ENCODE measurements at regions of chr16 and their contacts with region 1.

Region 1: DNA sequence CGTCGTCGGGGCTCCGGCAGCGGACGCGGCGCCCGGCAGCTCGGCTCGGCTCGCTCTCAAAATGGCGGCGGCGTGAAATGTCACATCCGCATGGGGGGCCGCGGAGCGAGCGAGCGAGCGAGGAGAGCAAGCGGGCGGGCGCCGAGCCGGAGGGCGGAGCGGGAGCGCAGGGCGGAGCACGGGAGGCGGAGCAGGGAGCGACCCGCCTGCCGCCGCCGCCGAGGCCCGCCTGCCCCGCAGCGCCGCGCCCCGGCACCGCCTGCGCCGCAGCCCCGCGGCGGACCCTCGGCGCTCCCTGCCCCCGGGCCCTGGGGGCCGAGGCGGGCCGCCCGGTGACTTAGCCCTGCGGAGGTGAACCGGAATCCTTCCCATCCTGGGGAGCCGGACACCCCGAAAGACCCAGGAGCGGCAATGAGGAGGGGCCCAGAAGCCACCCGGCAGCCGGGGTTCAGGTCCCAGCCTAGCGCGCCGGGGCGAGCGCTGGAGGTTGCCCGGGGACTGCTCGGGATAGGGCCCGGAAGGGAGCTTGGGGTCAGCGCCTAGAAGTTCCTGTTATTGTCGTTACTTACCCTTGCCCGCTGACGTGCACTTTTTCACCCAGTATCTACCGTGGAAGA is at the start of gene USP7:
- DNase-seq: peak; percentile 98
- H3K4me3 Mint-ChIP-seq: peak within 1 kb of the TSS; percentile 94
- H3K27ac Mint-ChIP-seq: peak within 1 kb of the TSS; percentile 93
- H3K4me1 Mint-ChIP-seq: peaks cover 37% of the 10 kb centered on the region
- H3K27me3 Mint-ChIP-seq: peaks cover 5% of the 10 kb centered on the region
- total RNA-seq, gene USP7: 180 and 186 TPM in 2 replicates

Region 2: GRCh38 chr16:8611886-8612600 is 351.9 kb before region 1 on chr16:
- intact Hi-C with region 1: no loop called
- DNase-seq: no peak
- H3K4me3 Mint-ChIP-seq: no peak overlapping the region
- H3K27ac Mint-ChIP-seq: no peak overlapping the region
- H3K4me1 Mint-ChIP-seq: no peaks in the 10 kb centered on the region
- H3K27me3 Mint-ChIP-seq: peaks cover 15% of the 10 kb centered on the region

Region 3: DNA sequence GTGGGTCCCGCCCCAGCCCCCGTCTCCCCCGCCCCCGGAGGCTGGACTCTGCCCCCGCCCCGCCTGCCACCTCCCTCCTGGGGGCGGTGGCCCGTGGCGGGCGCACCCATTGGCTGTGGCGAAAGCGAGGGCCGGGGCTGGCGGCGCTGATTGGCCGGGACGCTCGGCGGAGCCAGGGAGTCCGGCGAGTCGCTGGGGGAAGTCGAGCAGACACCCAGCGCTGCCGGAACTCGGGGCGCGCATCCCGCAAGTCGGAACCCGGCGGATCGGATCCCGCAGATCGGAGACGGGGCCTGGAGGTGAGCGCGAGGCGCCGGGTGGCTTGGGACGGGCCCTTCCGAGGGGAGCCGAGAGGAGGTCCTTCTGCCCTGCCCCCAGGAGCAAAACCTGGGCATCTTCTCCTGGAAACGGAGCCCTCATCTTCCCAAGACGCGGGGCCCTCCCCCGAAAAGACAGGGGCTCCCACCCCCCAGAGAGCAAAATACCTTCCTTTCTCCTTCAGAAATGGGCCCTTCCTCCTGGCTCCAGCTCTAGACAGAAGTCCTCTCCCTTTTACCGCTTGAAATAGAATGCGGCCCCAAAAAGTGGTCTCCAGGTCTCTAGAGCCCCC is 289.4 kb before region 1 on chr16 and contains the start of gene ABAT:
- intact Hi-C with region 1: loop called (anchors 5 kb)
- DNase-seq: peak; percentile 97
- H3K4me3 Mint-ChIP-seq: peak within 1 kb of the TSS; percentile 88
- H3K27ac Mint-ChIP-seq: peak within 1 kb of the TSS; percentile 91
- H3K4me1 Mint-ChIP-seq: peaks cover 15% of the 10 kb centered on the region
- H3K27me3 Mint-ChIP-seq: no peaks in the 10 kb centered on the region
- total RNA-seq, gene ABAT: 5.0 and 5.9 TPM in 2 replicates

Region 4: DNA sequence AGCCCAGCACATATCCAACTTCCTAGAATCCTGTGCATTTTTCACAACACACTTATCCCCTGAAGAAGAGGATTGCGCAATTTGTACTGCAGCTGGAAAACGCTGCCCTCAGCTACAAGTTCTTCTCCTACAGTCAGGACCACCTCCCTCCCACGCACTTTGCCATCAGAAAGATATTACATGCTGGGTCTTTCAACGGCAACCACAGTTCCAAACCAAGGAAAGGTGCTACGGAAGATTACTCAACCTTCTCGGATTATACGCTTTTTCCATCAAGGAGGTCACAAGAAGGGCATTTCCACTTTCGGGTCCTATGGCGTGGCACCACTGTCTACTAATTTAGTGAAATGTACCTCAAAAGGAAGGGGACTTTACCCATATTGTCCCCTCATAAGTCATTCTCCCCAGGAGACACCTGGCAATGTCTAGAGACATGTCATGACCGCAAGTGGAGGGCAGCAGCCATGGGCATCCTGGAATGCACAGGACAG is 35.4 kb before region 1 on chr16:
- intact Hi-C with region 1: loop called (anchors 5 kb)
- DNase-seq: no peak
- H3K4me3 Mint-ChIP-seq: no peak overlapping the region
- H3K27ac Mint-ChIP-seq: peak overlapping the region; percentile 83
- H3K4me1 Mint-ChIP-seq: peaks cover 31% of the 10 kb centered on the region
- H3K27me3 Mint-ChIP-seq: no peaks in the 10 kb centered on the region

Region 5: DNA sequence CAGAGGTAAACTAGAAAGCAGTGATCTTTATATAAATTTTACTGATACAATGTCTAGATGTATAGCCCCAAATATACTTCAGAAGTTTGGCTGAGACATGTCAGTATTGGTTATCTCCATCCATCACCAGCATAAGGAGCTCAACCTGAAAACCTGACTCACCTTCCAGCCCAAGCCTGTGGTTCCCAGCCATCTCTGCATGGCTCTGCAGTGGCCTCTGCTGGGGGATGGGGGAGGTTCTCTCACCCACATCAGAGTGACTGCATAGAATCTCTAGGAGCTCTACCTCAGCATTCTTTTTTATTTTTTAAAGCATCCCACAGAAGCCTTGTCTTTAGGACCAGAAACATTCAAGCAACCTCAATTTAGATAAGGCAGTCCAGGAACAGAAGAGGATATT is 27.5 kb before region 1 on chr16:
- intact Hi-C with region 1: loop called (anchors 2 kb)
- DNase-seq: peak; percentile 91
- H3K4me3 Mint-ChIP-seq: no peak overlapping the region
- H3K27ac Mint-ChIP-seq: peak overlapping the region; percentile 32
- H3K4me1 Mint-ChIP-seq: peaks cover 48% of the 10 kb centered on the region
- H3K27me3 Mint-ChIP-seq: no peaks in the 10 kb centered on the region

Region 6: DNA sequence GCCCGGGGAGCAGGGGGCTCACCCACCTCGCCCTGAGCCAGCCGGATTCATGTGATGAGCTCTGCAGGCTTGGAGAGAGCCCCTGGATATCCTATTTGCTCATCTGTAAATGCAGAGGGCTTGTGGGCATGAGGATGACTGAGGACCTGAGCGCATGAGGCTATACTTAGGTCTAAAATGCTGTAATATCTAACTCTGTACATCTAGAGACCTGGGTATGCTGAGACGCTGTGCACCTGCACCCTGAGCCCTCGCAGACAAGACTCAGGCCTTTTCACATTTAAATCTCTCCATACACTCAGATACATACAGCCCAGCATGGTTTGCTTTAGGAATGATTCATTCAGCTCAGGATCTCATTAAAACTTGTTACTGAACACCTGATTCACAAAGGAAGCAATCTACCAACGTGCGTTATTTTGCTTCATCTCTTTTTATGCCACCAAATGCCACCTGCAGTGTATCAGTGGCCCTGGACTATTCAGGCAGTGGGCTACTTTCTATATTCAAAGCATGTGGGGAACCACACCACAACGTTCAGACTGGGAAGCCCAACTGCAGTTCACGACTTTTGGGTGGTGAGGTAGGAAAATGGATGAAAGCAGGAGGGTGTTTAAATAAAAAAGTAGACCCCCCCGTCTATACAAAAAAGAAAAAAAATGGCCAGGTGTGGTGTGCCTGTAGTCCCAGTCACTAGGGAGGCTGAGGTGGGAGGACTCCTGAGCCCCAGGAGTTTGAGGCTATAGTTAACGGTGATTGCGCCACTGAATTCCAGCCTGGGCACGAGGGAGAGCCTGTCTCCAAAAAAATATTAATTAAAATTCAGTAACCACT is 12.3 kb before region 1 on chr16:
- intact Hi-C with region 1: no loop called
- DNase-seq: no peak
- H3K4me3 Mint-ChIP-seq: peak overlapping the region; percentile 23
- H3K27ac Mint-ChIP-seq: peak overlapping the region; percentile 68
- H3K4me1 Mint-ChIP-seq: peaks cover 66% of the 10 kb centered on the region
- H3K27me3 Mint-ChIP-seq: no peaks in the 10 kb centered on the region

Measured in activated CD4-positive, alpha-beta T cell treated with anti-CD3 and anti-CD28 coated beads, Interleukin-2, amount 10 ng/mL, durations not matched to agents 24 days and 14 days (primary cell).